Activated CD4-positive, alpha-beta memory T cell treated with anti-CD3 and anti-CD28 coated beads for 36 hours (primary cell): ENCODE measurements at regions of chr11 and their contacts with region 1.

Region 1: GRCh38 chr11:76235233-76236091 is 29.2 kb upstream of the WNT11 start:
- DNase-seq: peak; percentile 96
- H3K4me3 Mint-ChIP-seq: peak overlapping the region; percentile 81
- H3K27ac Mint-ChIP-seq: peak overlapping the region; percentile 84
- H3K4me1 Mint-ChIP-seq: peaks cover 44% of the 10 kb centered on the region
- H3K27me3 Mint-ChIP-seq: no peaks in the 10 kb centered on the region

Region 2: GRCh38 chr11:76185931-76186401 is 49.5 kb before region 1 on chr11:
- CTCF ChIA-PET with region 1: no interaction called
- POLR2A ChIA-PET with region 1: no interaction called
- intact Hi-C with region 1: no loop called
- DNase-seq: no peak
- H3K4me3 Mint-ChIP-seq: no peak overlapping the region
- H3K27ac Mint-ChIP-seq: no peak overlapping the region
- H3K4me1 Mint-ChIP-seq: no peaks in the 10 kb centered on the region
- H3K27me3 Mint-ChIP-seq: no peaks in the 10 kb centered on the region

Region 3: DNA sequence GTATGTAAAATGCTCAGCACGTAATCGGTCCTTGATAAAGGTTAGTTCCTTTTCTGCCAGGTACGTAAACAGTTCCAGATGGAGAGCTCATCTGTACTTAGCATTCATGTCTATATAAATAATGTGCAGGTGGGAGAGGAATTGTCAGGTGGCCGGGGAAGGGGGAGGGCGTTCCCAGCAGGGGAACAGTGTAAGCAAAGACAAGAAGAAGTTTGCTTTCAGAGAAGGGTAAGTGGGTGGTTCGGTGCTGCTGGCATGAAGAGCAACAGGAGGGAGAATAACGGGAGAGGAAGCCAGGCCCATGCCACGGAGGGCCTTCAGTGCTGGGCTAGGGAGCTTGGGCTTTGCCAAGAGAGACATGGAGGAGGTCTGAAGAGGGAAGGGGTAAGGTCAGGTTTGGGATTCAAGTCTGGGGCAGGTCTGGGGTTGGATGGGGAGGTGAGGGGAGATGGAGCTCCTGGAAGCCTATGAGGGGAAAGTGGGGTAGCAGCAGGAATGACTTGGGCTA is 17.8 kb before region 1 on chr11:
- CTCF ChIA-PET with region 1: no interaction called
- POLR2A ChIA-PET with region 1: no interaction called
- intact Hi-C with region 1: no loop called
- DNase-seq: no peak
- H3K4me3 Mint-ChIP-seq: no peak overlapping the region
- H3K27ac Mint-ChIP-seq: no peak overlapping the region
- H3K4me1 Mint-ChIP-seq: no peaks in the 10 kb centered on the region
- H3K27me3 Mint-ChIP-seq: peaks cover 2% of the 10 kb centered on the region

Region 4: GRCh38 chr11:76293189-76293631 is 57.7 kb after region 1 on chr11:
- CTCF ChIA-PET with region 1: no interaction called
- POLR2A ChIA-PET with region 1: no interaction called
- intact Hi-C with region 1: loop called (anchors 5 kb)
- DNase-seq: peak; percentile 70
- H3K4me3 Mint-ChIP-seq: no peak overlapping the region
- H3K27ac Mint-ChIP-seq: no peak overlapping the region
- H3K4me1 Mint-ChIP-seq: peaks cover 16% of the 10 kb centered on the region
- H3K27me3 Mint-ChIP-seq: no peaks in the 10 kb centered on the region

Region 5: GRCh38 chr11:76310832-76311595 is 75.6 kb after region 1 on chr11:
- CTCF ChIA-PET with region 1: no interaction called
- POLR2A ChIA-PET with region 1: no interaction called
- intact Hi-C with region 1: no loop called
- DNase-seq: no peak
- H3K4me3 Mint-ChIP-seq: no peak overlapping the region
- H3K27ac Mint-ChIP-seq: no peak overlapping the region
- H3K4me1 Mint-ChIP-seq: no peaks in the 10 kb centered on the region
- H3K27me3 Mint-ChIP-seq: no peaks in the 10 kb centered on the region

Region 6: GRCh38 chr11:76380967-76381719 is 145.7 kb after region 1 on chr11 and contains the starts of genes GVQW3 and THAP12:
- CTCF ChIA-PET with region 1: no interaction called
- POLR2A ChIA-PET with region 1: interaction called, 4 read pairs
- intact Hi-C with region 1: loop called (anchors 5 kb)
- DNase-seq: peak; percentile 98
- H3K4me3 Mint-ChIP-seq: peak within 1 kb of the TSS; percentile 87
- H3K27ac Mint-ChIP-seq: peak within 1 kb of the TSS; percentile 89
- H3K4me1 Mint-ChIP-seq: peaks cover 57% of the 10 kb centered on the region
- H3K27me3 Mint-ChIP-seq: no peaks in the 10 kb centered on the region
- total RNA-seq, gene GVQW3: 2.3 to 3.3 TPM
- total RNA-seq, gene THAP12: 46.2 to 49.2 TPM

Region 7: DNA sequence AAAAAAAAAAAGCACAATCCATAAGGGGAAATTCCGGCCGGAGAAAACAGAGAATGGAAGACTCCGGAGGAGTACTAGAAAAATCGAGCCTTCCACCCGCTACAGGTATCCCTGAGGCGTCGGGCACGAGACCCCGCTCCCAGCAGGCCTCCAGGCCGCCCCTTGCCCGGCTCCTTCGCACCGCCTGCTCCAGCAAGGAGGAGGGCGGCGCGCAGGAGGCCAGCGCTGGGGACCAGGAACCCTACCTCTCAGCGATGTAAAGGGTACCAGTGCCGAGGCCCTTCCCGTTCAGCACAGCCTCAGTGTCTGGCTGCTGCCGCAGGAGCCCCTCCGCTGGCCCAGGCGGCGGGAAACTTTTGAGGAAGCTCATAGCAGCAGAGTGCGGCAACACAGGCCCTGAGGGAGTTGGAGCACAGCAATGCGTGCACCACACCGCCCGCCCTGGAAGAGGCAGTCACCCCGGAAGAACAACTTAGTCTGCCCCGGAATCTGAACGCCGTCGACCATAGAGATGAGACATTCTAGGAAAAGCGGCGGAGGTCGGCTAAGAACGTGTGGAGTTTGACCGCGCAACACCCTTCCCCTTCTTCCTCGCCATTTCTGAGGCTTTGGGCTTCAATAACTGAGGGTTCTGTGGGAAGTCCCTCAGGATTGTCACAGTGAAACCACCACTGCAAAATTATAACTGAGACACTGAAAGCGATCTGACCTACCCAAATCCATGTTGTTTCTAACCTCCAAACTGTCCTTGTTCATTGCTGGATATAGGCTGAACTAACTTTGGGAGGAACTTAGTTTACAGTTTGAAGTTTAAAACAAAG is 1402.1 kb after region 1 on chr11 and contains the start of gene CLNS1A:
- CTCF ChIA-PET with region 1: no interaction called
- POLR2A ChIA-PET with region 1: no interaction called
- intact Hi-C with region 1: loop called (anchors 10 kb)
- DNase-seq: peak; percentile 90
- H3K4me3 Mint-ChIP-seq: peak within 1 kb of the TSS; percentile 95
- H3K27ac Mint-ChIP-seq: peak within 1 kb of the TSS; percentile 95
- H3K4me1 Mint-ChIP-seq: peaks cover 35% of the 10 kb centered on the region
- H3K27me3 Mint-ChIP-seq: no peaks in the 10 kb centered on the region
- total RNA-seq, gene CLNS1A: 199 to 200 TPM